CD8-positive, alpha-beta T cell (primary cell): ENCODE measurements at regions of chr1 and their contacts with region 1.

Region 1: GRCh38 chr1:84442256-84442655 is 36.8 kb upstream of the RPF1 start:
- DNase-seq: peak in 3 of 9 experiments; percentile 10 to 90 (median 83)
- ATAC-seq: peak; percentile 96
- H3K4me3 ChIP-seq: no peak overlapping the region
- H3K4me3 Mint-ChIP-seq: no peak overlapping the region
- H3K27ac ChIP-seq: no peak overlapping the region
- H3K27ac Mint-ChIP-seq: no peak overlapping the region
- H3K4me1 ChIP-seq: peaks cover 20% of the 10 kb centered on the region
- H3K4me1 Mint-ChIP-seq: peaks cover 15% of the 10 kb centered on the region
- H3K27me3 ChIP-seq: no peaks in the 10 kb centered on the region
- H3K27me3 Mint-ChIP-seq: peaks cover 4% of the 10 kb centered on the region
- CTCF ChIP-seq: peak; percentile 53

Region 2: GRCh38 chr1:84478876-84479868 is 36.9 kb after region 1 on chr1 and contains the start of gene RPF1:
- CTCF ChIA-PET with region 1: interaction called, 18 read pairs
- POLR2A ChIA-PET with region 1: interaction called, 10 read pairs
- intact Hi-C with region 1: loop called (anchors 1 to 5 kb)
- DNase-seq: peak; percentile 55 to 90 (median 82)
- ATAC-seq: peak; percentile 96
- H3K4me3 ChIP-seq: peak within 1 kb of the TSS; percentile 81 to 83
- H3K4me3 Mint-ChIP-seq: peak within 1 kb of the TSS; percentile 99
- H3K27ac ChIP-seq: peak within 1 kb of the TSS; percentile 88
- H3K27ac Mint-ChIP-seq: peak within 1 kb of the TSS; percentile 99
- H3K4me1 ChIP-seq: peaks cover 31% of the 10 kb centered on the region
- H3K4me1 Mint-ChIP-seq: peaks cover 42% of the 10 kb centered on the region
- H3K27me3 ChIP-seq: peaks cover 0 to 10% of the 10 kb centered on the region in 2 experiments
- H3K27me3 Mint-ChIP-seq: peaks cover 26% of the 10 kb centered on the region
- CTCF ChIP-seq: no peak
- total RNA-seq, gene RPF1: 84.2 to 85.3 TPM

Region 3: DNA sequence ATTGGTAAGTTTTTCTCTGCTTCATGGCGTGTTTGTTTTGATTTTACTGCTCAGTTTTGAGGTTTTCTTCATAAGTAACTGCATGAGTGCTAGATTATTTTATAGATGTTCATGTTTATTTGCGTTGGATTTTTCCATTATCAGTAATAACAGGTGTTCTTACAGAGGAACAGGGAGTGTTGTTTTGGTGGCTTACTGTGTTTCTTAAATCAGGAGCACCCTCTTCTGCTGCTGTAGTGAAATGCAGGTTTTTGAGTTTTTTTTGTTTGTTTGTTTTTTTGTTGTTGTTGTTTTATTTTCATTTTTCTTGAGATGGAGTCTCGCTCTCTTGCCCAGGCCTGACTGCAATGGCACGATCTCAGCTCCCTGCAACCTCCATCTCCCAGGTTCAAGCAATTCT is 99.4 kb after region 1 on chr1:
- CTCF ChIA-PET with region 1: interaction called, 3 read pairs
- POLR2A ChIA-PET with region 1: no interaction called
- intact Hi-C with region 1: loop called in 1 of 2 experiments (anchors 1 kb)
- DNase-seq: peak in 2 of 9 experiments; percentile 3 to 19
- ATAC-seq: no peak
- H3K4me3 ChIP-seq: no peak overlapping the region
- H3K4me3 Mint-ChIP-seq: no peak overlapping the region
- H3K27ac ChIP-seq: no peak overlapping the region
- H3K27ac Mint-ChIP-seq: no peak overlapping the region
- H3K4me1 ChIP-seq: no peaks in the 10 kb centered on the region
- H3K4me1 Mint-ChIP-seq: no peaks in the 10 kb centered on the region
- H3K27me3 ChIP-seq: no peaks in the 10 kb centered on the region
- H3K27me3 Mint-ChIP-seq: no peaks in the 10 kb centered on the region
- CTCF ChIP-seq: no peak

Region 4: DNA sequence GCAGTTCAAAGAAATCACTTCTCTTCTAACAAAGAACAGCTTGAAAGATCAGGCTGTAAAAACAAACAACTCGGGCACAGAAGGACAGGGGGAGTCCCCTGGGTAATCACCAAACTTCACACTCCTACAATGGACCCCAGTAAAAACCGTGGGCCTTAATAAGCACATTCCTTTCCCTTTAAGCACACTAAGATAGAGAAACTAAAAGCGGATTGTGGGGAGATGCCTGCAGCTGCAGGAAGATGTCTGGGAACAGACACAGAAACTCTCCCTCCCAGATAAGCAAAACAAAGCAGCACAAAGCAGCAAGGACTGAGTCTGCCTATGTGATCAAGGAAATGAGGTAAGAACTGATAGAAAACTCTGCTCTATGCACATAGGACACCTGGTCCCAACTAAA is 169.5 kb after region 1 on chr1:
- CTCF ChIA-PET with region 1: interaction called, 10 read pairs
- POLR2A ChIA-PET with region 1: no interaction called
- intact Hi-C with region 1: no loop called
- DNase-seq: peak in 3 of 9 experiments; percentile 40 to 73 (median 51)
- ATAC-seq: peak; percentile 90
- H3K4me3 ChIP-seq: no peak overlapping the region
- H3K4me3 Mint-ChIP-seq: peak overlapping the region; percentile 71
- H3K27ac ChIP-seq: peak overlapping the region; percentile 9
- H3K27ac Mint-ChIP-seq: peak overlapping the region; percentile 94
- H3K4me1 ChIP-seq: peaks cover 21% of the 10 kb centered on the region
- H3K4me1 Mint-ChIP-seq: peaks cover 22% of the 10 kb centered on the region
- H3K27me3 ChIP-seq: no peaks in the 10 kb centered on the region
- H3K27me3 Mint-ChIP-seq: no peaks in the 10 kb centered on the region
- CTCF ChIP-seq: no peak

Region 5: DNA sequence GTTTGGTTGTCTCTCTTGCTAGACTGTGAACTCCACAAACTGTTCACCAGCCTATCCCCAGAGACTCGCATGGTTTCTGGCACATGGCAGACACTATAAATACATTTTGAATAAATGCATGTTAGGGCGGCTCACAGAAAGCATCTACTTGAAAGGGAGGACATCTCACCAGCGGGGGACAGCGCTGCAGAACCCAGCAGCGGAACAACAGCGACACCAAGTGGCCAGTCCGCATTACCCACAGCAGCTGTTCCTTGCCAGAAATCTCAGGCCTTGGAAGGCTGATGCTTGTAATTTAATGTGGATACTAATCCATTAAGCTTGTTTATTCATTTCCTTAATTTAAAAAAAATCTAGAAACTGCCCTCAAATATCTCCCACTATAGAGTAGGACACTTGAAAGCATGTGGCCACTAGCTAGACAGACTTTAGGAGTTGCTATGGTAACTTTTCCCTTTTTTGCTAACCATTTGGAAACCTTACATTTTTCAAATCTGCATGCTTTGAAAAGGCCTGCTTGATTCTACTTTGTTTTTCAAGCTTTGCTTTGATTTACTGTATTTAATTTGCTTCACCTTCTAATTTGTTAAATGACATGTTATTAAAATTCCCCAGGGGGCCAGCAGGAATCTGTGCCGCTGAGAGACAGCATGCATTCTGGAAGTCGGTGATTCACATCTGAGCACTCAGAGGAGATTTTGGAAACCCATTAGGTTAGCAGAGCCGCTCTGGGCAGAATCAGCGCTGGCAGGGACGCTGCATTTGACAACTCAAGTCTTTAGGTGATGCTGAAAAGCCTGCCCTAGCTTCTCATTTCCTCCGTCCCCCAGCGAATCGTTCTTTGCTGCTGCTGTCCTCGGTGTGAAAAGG is 311.5 kb after region 1 on chr1:
- CTCF ChIA-PET with region 1: interaction called, 30 read pairs
- POLR2A ChIA-PET with region 1: no interaction called
- intact Hi-C with region 1: loop called (anchors 1 to 2 kb)
- DNase-seq: peak; percentile 56 to 86 (median 73)
- ATAC-seq: peak; percentile 93
- H3K4me3 ChIP-seq: no peak overlapping the region
- H3K4me3 Mint-ChIP-seq: no peak overlapping the region
- H3K27ac ChIP-seq: no peak overlapping the region
- H3K27ac Mint-ChIP-seq: no peak overlapping the region
- H3K4me1 ChIP-seq: no peaks in the 10 kb centered on the region
- H3K4me1 Mint-ChIP-seq: no peaks in the 10 kb centered on the region
- H3K27me3 ChIP-seq: no peaks in the 10 kb centered on the region
- H3K27me3 Mint-ChIP-seq: peaks cover 19% of the 10 kb centered on the region
- CTCF ChIP-seq: peak; percentile 94

Region 6: DNA sequence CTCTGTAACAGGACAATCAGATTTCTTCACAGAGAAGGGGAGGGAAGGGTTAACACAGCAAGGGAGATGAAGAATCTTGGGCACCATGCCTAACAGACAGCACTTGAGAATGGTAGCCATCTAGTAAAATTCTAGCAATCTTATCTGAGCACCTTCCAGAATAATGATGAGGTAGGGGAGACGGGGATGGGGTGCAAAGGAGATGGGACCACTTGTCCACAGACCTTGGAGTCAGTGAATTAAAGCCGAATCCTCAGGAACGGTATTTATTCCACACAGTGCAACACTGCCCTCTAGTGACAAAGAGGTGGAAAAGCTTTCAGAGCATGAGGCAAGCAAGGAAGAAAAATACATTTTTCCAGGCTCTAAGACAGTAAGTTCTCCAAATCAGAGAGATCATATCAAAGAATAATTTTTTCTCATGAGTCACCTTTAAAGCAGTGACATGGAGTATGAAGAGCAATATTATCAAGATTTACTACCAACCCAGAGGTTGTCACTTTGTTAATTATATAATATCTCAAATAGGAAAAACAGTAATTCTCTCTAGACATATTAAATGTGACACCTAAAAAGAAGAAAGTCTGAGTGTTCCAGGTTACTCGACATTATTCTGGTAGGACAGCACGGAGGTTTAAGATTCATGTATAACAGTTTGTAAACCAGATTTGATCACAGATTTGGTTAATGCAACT is 494.0 kb after region 1 on chr1:
- CTCF ChIA-PET with region 1: interaction called, 13 read pairs
- POLR2A ChIA-PET with region 1: no interaction called
- intact Hi-C with region 1: loop called (anchors 1 to 5 kb)
- DNase-seq: peak in 7 of 9 experiments; percentile 10 to 79 (median 35)
- ATAC-seq: peak; percentile 73
- H3K4me3 ChIP-seq: no peak overlapping the region
- H3K4me3 Mint-ChIP-seq: no peak overlapping the region
- H3K27ac ChIP-seq: no peak overlapping the region
- H3K27ac Mint-ChIP-seq: no peak overlapping the region
- H3K4me1 ChIP-seq: peaks cover 5% of the 10 kb centered on the region
- H3K4me1 Mint-ChIP-seq: peaks cover 4% of the 10 kb centered on the region
- H3K27me3 ChIP-seq: no peaks in the 10 kb centered on the region
- H3K27me3 Mint-ChIP-seq: no peaks in the 10 kb centered on the region
- CTCF ChIP-seq: peak; percentile 98

Region 7: DNA sequence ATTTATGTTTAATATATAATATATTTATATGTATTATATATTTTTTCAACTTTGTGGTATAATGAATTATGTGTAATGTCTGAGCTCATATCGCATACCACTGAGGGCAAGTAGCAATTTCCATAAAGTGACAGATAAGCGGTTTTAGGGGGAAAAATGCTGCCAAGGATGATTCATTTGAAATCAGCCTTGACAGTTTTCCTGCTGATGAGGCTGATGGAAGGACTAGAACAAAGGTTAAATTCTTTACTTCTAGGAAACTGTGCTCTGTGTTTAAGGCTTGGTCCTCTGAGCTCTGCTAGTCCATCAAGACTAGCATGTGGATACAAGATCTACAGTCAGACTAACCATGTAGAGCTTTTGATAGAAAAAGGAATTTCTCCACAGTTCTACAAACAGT is 1042.0 kb after region 1 on chr1:
- CTCF ChIA-PET with region 1: no interaction called
- POLR2A ChIA-PET with region 1: no interaction called
- intact Hi-C with region 1: no loop called
- DNase-seq: no peak
- ATAC-seq: no peak
- H3K4me3 ChIP-seq: no peak overlapping the region
- H3K4me3 Mint-ChIP-seq: no peak overlapping the region
- H3K27ac ChIP-seq: no peak overlapping the region
- H3K27ac Mint-ChIP-seq: no peak overlapping the region
- H3K4me1 ChIP-seq: no peaks in the 10 kb centered on the region
- H3K4me1 Mint-ChIP-seq: no peaks in the 10 kb centered on the region
- H3K27me3 ChIP-seq: no peaks in the 10 kb centered on the region
- H3K27me3 Mint-ChIP-seq: peaks cover 20% of the 10 kb centered on the region
- CTCF ChIP-seq: no peak